ENCODE measurements at regions of chr1 and their contacts with region 1.

Region 1: DNA sequence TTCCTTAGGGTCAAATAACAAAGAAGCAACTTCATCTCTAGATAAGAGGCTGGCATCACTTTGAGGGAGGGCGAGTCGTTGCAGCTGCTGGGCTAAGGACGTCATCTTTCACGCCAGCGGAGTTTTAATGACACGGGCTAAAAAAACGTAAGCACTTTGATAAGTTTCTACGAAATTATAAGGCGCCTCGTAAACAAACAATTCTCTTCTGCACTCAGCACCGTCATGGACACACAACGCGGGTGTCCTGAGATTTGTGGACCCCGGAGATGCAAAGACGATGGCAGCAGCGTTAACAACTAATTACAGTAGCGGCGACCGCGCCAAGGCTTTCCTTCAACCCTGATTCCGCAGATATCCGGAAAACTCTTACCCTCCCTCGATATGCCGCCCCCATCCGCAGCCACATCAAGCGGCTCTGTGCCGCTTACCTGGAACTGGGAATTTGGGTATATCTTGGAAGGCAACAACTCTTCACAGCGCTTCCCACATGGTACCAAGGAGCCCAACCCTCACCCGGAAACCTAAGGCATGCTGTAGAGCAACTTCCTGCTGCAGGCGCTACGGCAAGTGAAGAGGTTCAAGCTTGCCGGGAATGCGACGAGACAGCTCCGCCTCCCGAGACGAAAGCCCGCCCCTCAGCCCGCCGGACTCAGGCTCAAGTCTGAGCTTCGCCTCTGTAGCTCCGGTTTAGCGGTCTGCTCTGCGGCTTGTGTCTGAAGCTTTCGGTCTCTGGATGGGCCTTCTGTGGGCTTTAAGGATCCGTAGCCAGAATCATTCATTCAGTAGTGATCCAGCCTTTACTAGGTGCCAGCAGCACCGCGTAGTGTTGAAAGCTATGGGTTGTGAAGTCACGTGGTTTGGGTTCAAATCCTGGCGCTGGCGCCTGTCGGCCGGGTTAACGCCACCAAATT is at the start of gene HEATR1:
- DNase-seq: peak; percentile 93
- H3K4me3 Mint-ChIP-seq: peak within 1 kb of the TSS; percentile 97
- H3K27ac Mint-ChIP-seq: peak within 1 kb of the TSS; percentile 88
- H3K4me1 Mint-ChIP-seq: peaks cover 31% of the 10 kb centered on the region
- H3K27me3 Mint-ChIP-seq: peaks cover 7% of the 10 kb centered on the region
- total RNA-seq, gene HEATR1: 71.6 to 75.1 TPM

Region 2: DNA sequence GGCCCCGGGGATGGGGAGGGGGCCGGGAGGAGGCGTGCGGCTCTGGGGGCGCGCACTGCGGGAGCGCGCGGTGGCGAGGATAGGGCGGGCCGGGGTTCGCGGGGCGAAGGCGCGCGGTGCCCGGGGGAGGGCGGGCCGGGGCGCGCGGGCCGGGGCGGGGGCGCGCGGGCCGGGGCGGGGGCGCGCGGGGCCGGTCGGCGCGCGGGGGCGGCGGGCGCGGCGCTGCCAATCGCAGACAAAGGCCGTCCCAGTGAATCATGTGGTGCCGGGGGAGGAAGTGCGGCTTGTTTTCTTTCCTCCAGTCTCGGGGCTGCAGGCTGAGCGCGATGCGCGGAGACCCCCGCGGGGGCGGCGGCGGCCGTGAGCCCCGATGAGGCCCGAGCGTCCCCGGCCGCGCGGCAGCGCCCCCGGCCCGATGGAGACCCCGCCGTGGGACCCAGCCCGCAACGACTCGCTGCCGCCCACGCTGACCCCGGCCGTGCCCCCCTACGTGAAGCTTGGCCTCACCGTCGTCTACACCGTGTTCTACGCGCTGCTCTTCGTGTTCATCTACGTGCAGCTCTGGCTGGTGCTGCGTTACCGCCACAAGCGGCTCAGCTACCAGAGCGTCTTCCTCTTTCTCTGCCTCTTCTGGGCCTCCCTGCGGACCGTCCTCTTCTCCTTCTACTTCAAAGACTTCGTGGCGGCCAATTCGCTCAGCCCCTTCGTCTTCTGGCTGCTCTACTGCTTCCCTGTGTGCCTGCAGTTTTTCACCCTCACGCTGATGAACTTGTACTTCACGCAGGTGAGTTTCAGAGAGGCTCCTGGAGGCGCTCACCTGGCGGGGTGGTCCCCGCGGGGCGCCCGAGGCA is 461.8 kb before region 1 on chr1 and contains the start of gene GPR137B:
- CTCF ChIA-PET with region 1: no interaction called
- intact Hi-C with region 1: loop called (anchors 5 kb)
- DNase-seq: peak; percentile 74
- H3K4me3 Mint-ChIP-seq: peak within 1 kb of the TSS; percentile 87
- H3K27ac Mint-ChIP-seq: no peak within 1 kb of the TSS
- H3K4me1 Mint-ChIP-seq: peaks cover 9% of the 10 kb centered on the region
- H3K27me3 Mint-ChIP-seq: peaks cover 37% of the 10 kb centered on the region
- total RNA-seq, gene GPR137B: 1.6 to 2.4 TPM

Region 3: GRCh38 chr1:236685917-236686814 is 81.9 kb after region 1 on chr1 and contains the start of gene ACTN2:
- CTCF ChIA-PET with region 1: no interaction called
- intact Hi-C with region 1: loop called (anchors 2 kb)
- DNase-seq: peak; percentile 41
- H3K4me3 Mint-ChIP-seq: peak within 1 kb of the TSS; percentile 58
- H3K27ac Mint-ChIP-seq: no peak within 1 kb of the TSS
- H3K4me1 Mint-ChIP-seq: peaks cover 18% of the 10 kb centered on the region
- H3K27me3 Mint-ChIP-seq: peaks cover 41% of the 10 kb centered on the region
- total RNA-seq, gene ACTN2: 0.36 TPM in 1 of 2 experiments, not detected in the other

Region 4: GRCh38 chr1:236868625-236869467 is 264.6 kb after region 1 on chr1:
- CTCF ChIA-PET with region 1: no interaction called
- intact Hi-C with region 1: loop called (anchors 1 kb)
- DNase-seq: peak; percentile 61
- H3K4me3 Mint-ChIP-seq: no peak overlapping the region
- H3K27ac Mint-ChIP-seq: no peak overlapping the region
- H3K4me1 Mint-ChIP-seq: peaks cover 2% of the 10 kb centered on the region
- H3K27me3 Mint-ChIP-seq: no peaks in the 10 kb centered on the region

Region 5: DNA sequence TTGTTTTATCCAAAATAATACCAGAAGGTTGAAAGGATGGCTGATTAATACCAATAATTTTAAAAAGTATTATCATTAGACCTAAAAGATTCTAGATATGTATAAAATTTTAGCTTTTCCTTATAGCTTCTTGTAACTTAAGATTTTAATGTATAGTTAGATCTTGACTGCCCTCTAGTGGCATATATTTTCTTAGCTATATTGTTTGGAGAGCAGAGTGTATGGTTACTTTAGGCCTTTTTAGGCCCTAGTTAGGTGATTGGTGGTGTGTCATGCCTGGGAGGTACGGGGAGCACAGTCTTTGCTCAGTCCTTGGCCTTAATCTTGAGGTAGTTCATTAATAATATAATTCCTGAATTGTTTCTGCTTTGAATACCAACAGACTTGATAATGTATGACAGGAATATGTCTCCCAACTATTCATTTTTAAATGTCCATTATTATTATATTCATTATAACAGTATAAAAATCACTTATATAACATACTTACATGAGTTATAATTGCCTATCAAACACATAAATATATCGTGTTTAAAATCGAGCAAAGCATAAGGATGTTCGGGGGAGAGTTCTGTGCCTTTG is 958.1 kb after region 1 on chr1:
- CTCF ChIA-PET with region 1: interaction called, 3 read pairs
- intact Hi-C with region 1: loop called (anchors 5 kb)
- DNase-seq: no peak
- H3K4me3 Mint-ChIP-seq: no peak overlapping the region
- H3K27ac Mint-ChIP-seq: no peak overlapping the region
- H3K4me1 Mint-ChIP-seq: no peaks in the 10 kb centered on the region
- H3K27me3 Mint-ChIP-seq: peaks cover 7% of the 10 kb centered on the region

Measured in activated naive CD4-positive, alpha-beta T cell treated with anti-CD3 and anti-CD28 coated beads for 36 hours (primary cell).